PC-9 (cell line): ENCODE measurements at regions of chr2 and their contacts with region 1.

Region 1: DNA sequence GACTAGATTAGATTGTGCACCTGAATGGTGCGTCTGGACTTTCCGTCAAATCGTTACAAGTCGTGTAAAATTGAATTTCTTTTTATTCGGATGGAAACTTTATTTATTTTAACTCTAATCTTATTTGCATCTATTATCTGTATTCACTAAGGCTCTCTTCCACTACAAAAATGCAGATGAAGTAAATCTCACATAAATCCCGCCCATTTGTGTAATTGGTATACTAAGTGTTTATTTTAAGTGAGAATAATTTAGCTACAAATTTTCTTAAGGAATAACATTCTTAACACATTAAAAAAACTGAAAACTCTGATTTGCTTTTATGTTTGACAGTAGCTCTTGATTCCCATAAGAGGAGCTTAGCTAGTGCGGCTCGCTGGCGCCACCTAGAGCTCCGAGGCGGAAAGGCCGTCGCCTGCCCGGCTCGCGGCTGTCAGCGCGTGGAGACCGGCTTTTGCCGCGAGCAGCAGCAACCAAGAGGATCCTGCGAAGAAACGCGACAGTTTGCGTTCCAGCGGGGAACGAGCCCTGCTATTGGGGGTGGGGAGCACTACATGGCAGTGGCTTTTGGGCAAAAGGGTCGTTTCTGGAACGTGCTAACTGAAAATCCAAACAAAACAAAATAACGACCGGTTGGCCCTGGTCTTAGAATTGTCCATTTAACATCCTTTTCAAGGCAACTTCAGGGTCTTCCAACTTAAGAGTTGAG is 6.7 kb downstream of the SP9 start:
- DNase-seq: peak; percentile 72 to 94
- H3K4me3 ChIP-seq: peak overlapping the region; percentile 31; the same call in 1 of the 2 replicates
- H3K27ac ChIP-seq: no peak overlapping the region
- H3K4me1 ChIP-seq: peaks cover 4% of the 10 kb centered on the region; the same call in 1 of the 2 replicates
- H3K27me3 ChIP-seq: no peaks in the 10 kb centered on the region
- CTCF ChIP-seq: peak; percentile 100

Region 2: GRCh38 chr2:172806493-172806892 is 1534.9 kb before region 1 on chr2:
- CTCF ChIA-PET with region 1: no interaction called
- POLR2A ChIA-PET with region 1: no interaction called
- intact Hi-C with region 1: loop called (anchors 2 kb)
- DNase-seq: peak; percentile 23 to 68
- H3K4me3 ChIP-seq: no peak overlapping the region
- H3K27ac ChIP-seq: no peak overlapping the region
- H3K4me1 ChIP-seq: no peaks in the 10 kb centered on the region
- H3K27me3 ChIP-seq: no peaks in the 10 kb centered on the region
- CTCF ChIP-seq: peak; percentile 100

Region 3: DNA sequence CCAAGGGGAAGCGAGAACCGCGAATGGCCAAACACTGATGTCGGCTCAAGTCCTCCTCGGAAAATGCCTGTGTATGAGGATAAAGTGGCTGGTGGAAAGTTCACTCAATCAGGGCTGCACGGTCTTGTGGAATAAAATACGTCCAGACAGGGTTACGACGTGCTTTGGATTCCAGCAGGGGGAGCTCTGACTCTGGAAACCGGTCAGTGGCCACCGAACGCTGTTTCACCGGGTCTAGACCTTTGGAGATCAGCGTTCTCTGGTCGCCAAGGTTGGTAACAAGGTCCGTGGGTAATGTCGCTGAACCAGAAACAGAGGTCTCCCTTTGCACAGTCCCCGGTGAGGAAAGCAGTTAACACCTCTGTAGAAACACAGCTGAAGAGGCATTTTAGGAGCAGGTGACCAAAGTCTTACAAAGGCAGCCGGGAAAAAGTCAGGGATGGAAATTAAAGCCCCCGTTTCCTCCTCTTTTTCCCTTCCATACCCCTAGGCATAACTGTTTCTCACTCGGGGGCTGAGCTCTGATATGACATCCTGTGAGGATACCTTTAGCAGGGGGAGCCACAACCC is 939.0 kb before region 1 on chr2:
- CTCF ChIA-PET with region 1: interaction called, 17 read pairs
- POLR2A ChIA-PET with region 1: no interaction called
- intact Hi-C with region 1: loop called (anchors 1 kb)
- DNase-seq: peak; percentile 79 to 88
- H3K4me3 ChIP-seq: peak overlapping the region; percentile 38; the same call in 1 of the 2 replicates
- H3K27ac ChIP-seq: no peak overlapping the region
- H3K4me1 ChIP-seq: peaks cover 11% of the 10 kb centered on the region; the same call in 1 of the 2 replicates
- H3K27me3 ChIP-seq: peaks cover 24% of the 10 kb centered on the region; the same call in 1 of the 2 replicates
- CTCF ChIP-seq: peak; percentile 99

Region 4: DNA sequence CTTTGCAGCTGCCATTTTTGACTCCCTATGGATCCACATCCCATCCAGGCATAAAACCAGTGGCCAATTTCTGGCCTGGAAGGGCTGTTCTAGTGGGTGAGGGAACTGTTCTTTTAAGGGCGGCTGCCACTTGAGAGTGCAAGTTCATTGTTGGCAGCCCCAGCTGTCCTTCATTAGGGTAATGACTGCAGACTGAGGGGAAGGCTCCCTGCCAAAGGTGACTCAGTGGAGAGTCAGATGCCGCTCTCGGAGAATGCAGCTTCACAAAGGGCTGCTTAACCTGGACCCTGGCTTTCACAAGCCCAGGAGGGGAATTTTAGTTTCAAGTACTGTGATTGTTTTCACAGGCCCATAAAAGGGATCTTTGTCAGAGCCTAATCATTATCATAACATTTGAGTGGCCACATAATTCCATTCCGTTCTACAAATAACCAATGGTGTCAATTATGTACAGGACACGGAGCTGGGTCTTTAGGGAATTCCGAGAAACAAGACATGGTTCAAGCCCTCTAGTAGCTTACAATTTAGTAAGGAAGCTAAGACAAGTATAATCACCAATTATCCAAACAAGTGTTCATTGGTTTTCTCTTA is 751.1 kb before region 1 on chr2:
- CTCF ChIA-PET with region 1: interaction called, 25 read pairs
- POLR2A ChIA-PET with region 1: no interaction called
- intact Hi-C with region 1: no loop called
- DNase-seq: peak; percentile 87 to 94
- H3K4me3 ChIP-seq: peak overlapping the region; percentile 41; the same call in 1 of the 2 replicates
- H3K27ac ChIP-seq: peak overlapping the region; percentile 72
- H3K4me1 ChIP-seq: peaks cover 32% of the 10 kb centered on the region
- H3K27me3 ChIP-seq: no peaks in the 10 kb centered on the region
- CTCF ChIP-seq: no peak

Region 5: DNA sequence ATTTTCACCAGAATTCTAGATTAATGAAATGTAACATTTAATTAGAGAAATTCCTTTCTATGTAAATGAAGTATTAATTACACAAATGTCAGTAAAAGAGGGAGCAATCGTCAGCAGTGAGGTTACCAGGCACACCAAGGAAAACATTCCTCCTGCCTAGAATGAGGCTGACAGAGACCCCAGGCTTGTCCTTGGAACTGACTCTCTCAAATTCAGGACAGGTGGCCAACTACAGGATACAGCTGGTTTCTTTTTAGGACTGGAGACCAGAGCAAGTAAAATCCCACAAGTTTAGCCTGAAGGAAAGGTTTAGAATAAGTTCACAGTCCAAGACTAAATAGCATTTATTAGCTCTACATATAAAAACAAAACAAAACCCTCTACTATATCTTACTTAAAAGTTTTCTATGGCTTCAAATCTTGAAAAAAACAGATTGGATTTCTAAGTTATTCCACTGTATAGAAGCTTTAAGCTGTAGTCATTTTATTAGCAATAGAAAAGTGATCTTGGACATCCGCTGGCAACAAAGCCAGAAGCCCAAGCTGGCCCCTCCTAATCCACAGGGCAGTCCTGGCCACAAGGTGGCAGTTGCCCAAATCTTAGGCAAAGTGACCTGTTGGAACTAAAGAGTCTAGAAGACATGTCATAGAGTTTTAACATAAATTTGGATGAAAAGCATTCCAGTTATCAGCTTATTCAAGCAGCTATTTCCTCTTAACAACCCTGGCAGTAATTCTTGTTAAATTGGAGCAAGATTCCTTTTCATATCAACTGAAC is 457.2 kb before region 1 on chr2:
- CTCF ChIA-PET with region 1: interaction called, 4 read pairs
- POLR2A ChIA-PET with region 1: no interaction called
- intact Hi-C with region 1: loop called (anchors 5 kb)
- DNase-seq: peak; percentile 49 to 55
- H3K4me3 ChIP-seq: no peak overlapping the region
- H3K27ac ChIP-seq: no peak overlapping the region
- H3K4me1 ChIP-seq: no peaks in the 10 kb centered on the region
- H3K27me3 ChIP-seq: 0 out of 2 replicates have a peak, but pooled peaks cover 11% of the 10 kb centered on the region
- CTCF ChIP-seq: peak; percentile 87

Region 6: GRCh38 chr2:174051741-174052583 is 289.5 kb before region 1 on chr2:
- CTCF ChIA-PET with region 1: interaction called, 4 read pairs
- POLR2A ChIA-PET with region 1: no interaction called
- intact Hi-C with region 1: loop called (anchors 5 kb)
- DNase-seq: peak; percentile 83
- H3K4me3 ChIP-seq: no peak overlapping the region; the same call in 1 of the 2 replicates
- H3K27ac ChIP-seq: no peak overlapping the region
- H3K4me1 ChIP-seq: peaks cover 21% of the 10 kb centered on the region
- H3K27me3 ChIP-seq: no peaks in the 10 kb centered on the region
- CTCF ChIP-seq: no peak

Region 7: DNA sequence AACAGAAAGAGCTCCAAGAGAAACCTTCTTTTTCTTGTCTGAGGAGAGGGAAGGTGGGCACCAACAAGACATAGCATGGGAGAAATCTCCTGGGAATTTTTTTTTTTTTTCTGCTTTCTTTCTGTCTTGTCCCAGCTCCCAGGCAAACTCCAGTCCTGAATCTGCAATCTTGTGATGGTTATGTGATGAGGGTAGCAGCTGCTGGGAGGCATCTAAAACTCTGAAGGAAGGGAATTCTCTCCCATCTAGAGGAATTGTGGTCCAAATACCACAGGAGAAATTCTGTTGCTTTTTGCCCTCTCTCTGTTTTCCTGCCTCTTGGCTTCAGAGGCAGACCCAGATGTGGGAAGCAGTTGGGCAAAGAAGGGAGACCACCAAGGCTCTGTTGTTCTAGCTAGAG is 70.8 kb after region 1 on chr2:
- CTCF ChIA-PET with region 1: no interaction called
- POLR2A ChIA-PET with region 1: no interaction called
- intact Hi-C with region 1: no loop called
- DNase-seq: no peak
- H3K4me3 ChIP-seq: no peak overlapping the region
- H3K27ac ChIP-seq: no peak overlapping the region
- H3K4me1 ChIP-seq: no peaks in the 10 kb centered on the region
- H3K27me3 ChIP-seq: no peaks in the 10 kb centered on the region
- CTCF ChIP-seq: no peak